ENCODE measurements at regions of chr3 and their contacts with region 1.

Region 1: GRCh38 chr3:33787328-33788009 is 11.0 kb upstream of the PDCD6IP start:
- DNase-seq: peak; percentile 75
- ATAC-seq: peak; percentile 91
- H3K4me3 Mint-ChIP-seq: peak overlapping the region; percentile 31
- H3K27ac Mint-ChIP-seq: no peak overlapping the region
- H3K4me1 Mint-ChIP-seq: peaks cover 4% of the 10 kb centered on the region
- H3K27me3 Mint-ChIP-seq: peaks cover 2% of the 10 kb centered on the region
- CTCF ChIP-seq: peak; percentile 80

Region 2: GRCh38 chr3:33372218-33373081 is 415.0 kb before region 1 on chr3:
- CTCF ChIA-PET with region 1: interaction called, 13 read pairs
- POLR2A ChIA-PET with region 1: no interaction called
- intact Hi-C with region 1: no loop called
- DNase-seq: peak; percentile 59
- ATAC-seq: peak; percentile 93
- H3K4me3 Mint-ChIP-seq: no peak overlapping the region
- H3K27ac Mint-ChIP-seq: no peak overlapping the region
- H3K4me1 Mint-ChIP-seq: peaks cover 2% of the 10 kb centered on the region
- H3K27me3 Mint-ChIP-seq: peaks cover 12% of the 10 kb centered on the region
- CTCF ChIP-seq: peak; percentile 98

Region 3: GRCh38 chr3:33629219-33629618 is 158.2 kb before region 1 on chr3:
- CTCF ChIA-PET with region 1: interaction called, 44 read pairs
- POLR2A ChIA-PET with region 1: interaction called, 3 read pairs
- intact Hi-C with region 1: no loop called
- DNase-seq: no peak
- ATAC-seq: no peak
- H3K4me3 Mint-ChIP-seq: no peak overlapping the region
- H3K27ac Mint-ChIP-seq: no peak overlapping the region
- H3K4me1 Mint-ChIP-seq: no peaks in the 10 kb centered on the region
- H3K27me3 Mint-ChIP-seq: no peaks in the 10 kb centered on the region
- CTCF ChIP-seq: no peak

Region 4: GRCh38 chr3:33645060-33645647 is 142.3 kb before region 1 on chr3:
- CTCF ChIA-PET with region 1: interaction called, 26 read pairs
- POLR2A ChIA-PET with region 1: no interaction called
- intact Hi-C with region 1: no loop called
- DNase-seq: peak; percentile 47
- ATAC-seq: peak; percentile 85
- H3K4me3 Mint-ChIP-seq: peak overlapping the region; percentile 66
- H3K27ac Mint-ChIP-seq: no peak overlapping the region
- H3K4me1 Mint-ChIP-seq: peaks cover 18% of the 10 kb centered on the region
- H3K27me3 Mint-ChIP-seq: no peaks in the 10 kb centered on the region
- CTCF ChIP-seq: no peak

Region 5: DNA sequence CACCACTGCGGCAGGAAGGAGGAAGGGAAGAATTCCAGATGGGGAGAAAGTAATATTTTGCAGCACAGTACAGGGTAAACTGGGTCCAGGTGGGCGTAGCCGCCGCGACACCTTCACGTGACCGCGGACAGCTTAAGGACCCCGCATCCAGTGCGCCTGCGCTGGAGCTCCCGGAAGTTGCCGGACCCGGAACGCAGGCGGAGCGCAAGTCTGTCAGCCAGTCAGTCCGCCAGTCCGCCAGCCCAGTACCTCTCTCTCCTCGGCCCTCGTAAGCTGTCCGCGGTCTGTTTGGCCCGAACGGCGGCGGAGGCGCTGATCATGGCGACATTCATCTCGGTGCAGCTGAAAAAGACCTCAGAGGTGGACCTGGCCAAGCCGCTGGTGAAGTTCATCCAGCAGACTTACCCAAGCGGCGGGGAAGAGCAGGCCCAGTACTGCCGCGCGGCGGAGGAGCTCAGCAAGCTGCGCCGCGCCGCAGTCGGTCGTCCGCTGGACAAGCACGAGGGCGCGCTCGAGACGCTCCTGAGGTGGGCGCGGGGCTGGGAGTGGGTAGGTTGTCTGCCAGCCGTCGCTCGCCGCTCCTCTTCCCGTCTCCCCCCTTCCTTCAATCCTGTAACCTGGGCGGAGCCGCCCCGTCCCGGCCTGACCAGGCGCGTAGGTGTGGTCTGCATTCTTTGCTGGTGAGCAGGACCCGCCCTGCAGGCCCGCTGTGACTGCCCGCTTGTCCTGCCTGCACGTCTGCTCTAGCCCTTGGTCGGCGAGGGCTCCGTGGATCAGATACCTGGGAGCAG is 11.1 kb after region 1 on chr3 and contains the start of gene PDCD6IP:
- CTCF ChIA-PET with region 1: interaction called, 22 read pairs
- POLR2A ChIA-PET with region 1: interaction called, 5 read pairs
- intact Hi-C with region 1: no loop called
- DNase-seq: peak; percentile 92
- ATAC-seq: peak; percentile 90
- H3K4me3 Mint-ChIP-seq: peak within 1 kb of the TSS; percentile 84
- H3K27ac Mint-ChIP-seq: peak within 1 kb of the TSS; percentile 92
- H3K4me1 Mint-ChIP-seq: peaks cover 45% of the 10 kb centered on the region
- H3K27me3 Mint-ChIP-seq: no peaks in the 10 kb centered on the region
- CTCF ChIP-seq: peak; percentile 35
- total RNA-seq, gene PDCD6IP: 139 to 146 TPM

Measured in activated CD8-positive, alpha-beta T cell treated with anti-CD3 and anti-CD28 coated beads for 36 hours (primary cell).